ENCODE measurements at regions of chr1 and their contacts with region 1.

Region 1: DNA sequence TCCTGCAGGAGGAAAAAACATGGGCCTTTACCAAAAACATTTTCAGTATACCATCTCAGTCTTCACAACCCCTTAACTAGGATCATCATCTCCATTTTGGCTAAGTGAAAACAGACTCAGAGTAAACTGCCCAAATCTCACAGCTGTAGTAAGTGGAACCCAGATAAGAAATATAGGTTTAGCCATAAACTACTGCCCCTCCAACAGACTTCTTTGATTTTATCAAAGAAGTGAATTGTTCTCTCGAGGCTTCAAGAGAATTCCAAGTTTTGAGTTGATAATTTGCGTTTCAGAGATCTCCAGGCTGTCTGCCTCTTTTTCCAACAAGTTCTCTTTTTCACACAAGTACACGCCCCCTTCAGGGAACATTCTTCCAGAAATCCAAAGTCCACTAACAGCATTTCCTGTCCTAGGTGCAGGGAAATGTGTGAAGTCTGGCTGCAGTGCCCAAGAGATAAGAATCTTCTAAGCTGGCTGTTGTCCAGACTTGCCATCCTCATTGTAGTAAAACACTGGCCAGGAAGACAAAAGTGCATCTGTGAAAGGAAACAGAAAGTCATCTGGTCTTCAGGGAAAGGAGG is 30.8 kb downstream of the RNF19B start:
- DNase-seq: peak; percentile 79
- H3K4me3 ChIP-seq: no peak overlapping the region; a peak in 1 of 4 replicates
- H3K27ac ChIP-seq: peak overlapping the region; percentile 77 to 80
- H3K4me1 ChIP-seq: peaks cover 5 to 13% of the 10 kb centered on the region in 2 experiments
- H3K27me3 ChIP-seq: no peaks in the 10 kb centered on the region
- CTCF ChIP-seq: no peak; the same call in 1 of the 2 replicates
- EP300 ChIP-seq: peak; percentile 53 to 88; a peak in 3 of 4 replicates
- RAD21 ChIP-seq: peak; percentile 41

Region 2: GRCh38 chr1:32516402-32516801 is 417.4 kb before region 1 on chr1:
- CTCF ChIA-PET with region 1: no interaction called
- POLR2A ChIA-PET with region 1: no interaction called
- DNase-seq: no peak
- H3K4me3 ChIP-seq: no peak overlapping the region
- H3K27ac ChIP-seq: no peak overlapping the region
- H3K4me1 ChIP-seq: no peaks in the 10 kb centered on the region
- H3K27me3 ChIP-seq: no peaks in the 10 kb centered on the region
- CTCF ChIP-seq: no peak
- EP300 ChIP-seq: no peak
- RAD21 ChIP-seq: no peak

Region 3: GRCh38 chr1:32892368-32893197 is 41.2 kb before region 1 on chr1:
- CTCF ChIA-PET with region 1: interaction called, 16 read pairs
- POLR2A ChIA-PET with region 1: interaction called, 4 read pairs
- DNase-seq: peak; percentile 92
- H3K4me3 ChIP-seq: peak overlapping the region in 1 of 2 experiments; percentile 14; a peak in 3 of 4 replicates
- H3K27ac ChIP-seq: no peak overlapping the region
- H3K4me1 ChIP-seq: peaks cover 0 to 4% of the 10 kb centered on the region in 2 experiments; a peak in 2 of 4 replicates
- H3K27me3 ChIP-seq: 0 out of 2 replicates have a peak, but pooled peaks cover 5% of the 10 kb centered on the region
- CTCF ChIP-seq: peak; percentile 56
- EP300 ChIP-seq: no peak
- RAD21 ChIP-seq: no peak

Region 4: GRCh38 chr1:32944180-32944579 is 10.3 kb after region 1 on chr1:
- CTCF ChIA-PET with region 1: interaction called, 18 read pairs
- POLR2A ChIA-PET with region 1: no interaction called
- DNase-seq: no peak
- H3K4me3 ChIP-seq: no peak overlapping the region
- H3K27ac ChIP-seq: no peak overlapping the region
- H3K4me1 ChIP-seq: peaks cover 0 to 13% of the 10 kb centered on the region in 2 experiments; a peak in 3 of 4 replicates
- H3K27me3 ChIP-seq: no peaks in the 10 kb centered on the region
- CTCF ChIP-seq: no peak
- EP300 ChIP-seq: no peak
- RAD21 ChIP-seq: no peak

Region 5: DNA sequence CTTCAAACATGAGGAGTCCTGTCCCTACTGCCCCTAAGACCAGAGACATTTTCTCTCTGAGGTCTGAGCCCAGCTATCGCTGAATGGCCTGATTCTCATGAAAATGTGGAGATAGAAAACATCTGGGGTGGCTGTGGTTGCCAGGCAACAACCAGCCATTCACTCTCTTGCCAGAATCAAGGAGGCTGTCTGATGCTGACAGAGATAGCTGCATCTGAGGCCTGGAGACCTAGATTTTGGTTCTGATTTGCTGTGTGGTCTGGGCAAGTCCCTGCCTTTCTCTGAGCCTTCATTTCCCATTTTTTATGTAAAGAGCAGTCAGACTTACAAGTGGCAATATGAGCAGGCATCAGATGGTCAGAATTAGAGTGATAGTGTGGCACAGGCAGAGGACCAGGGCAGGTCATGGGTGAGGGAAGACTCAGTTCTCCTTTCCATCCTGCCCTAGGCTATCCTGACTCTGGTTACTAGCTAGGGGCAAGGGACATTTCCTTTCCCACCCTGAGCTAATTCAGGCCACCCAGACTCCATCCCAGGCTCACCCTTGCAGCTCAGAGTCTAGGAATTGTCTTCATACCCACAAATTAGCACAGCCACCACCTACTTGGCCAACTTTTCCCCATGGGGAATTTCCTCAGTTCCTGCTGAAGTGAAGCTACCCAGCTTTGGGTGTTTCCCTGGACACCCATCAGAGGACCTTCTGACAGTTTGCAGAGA is 50.8 kb after region 1 on chr1:
- CTCF ChIA-PET with region 1: interaction called, 15 read pairs
- POLR2A ChIA-PET with region 1: no interaction called
- DNase-seq: peak; percentile 86
- H3K4me3 ChIP-seq: no peak overlapping the region
- H3K27ac ChIP-seq: peak overlapping the region; percentile 71 to 95; a peak in 3 of 4 replicates
- H3K4me1 ChIP-seq: peaks cover 24 to 29% of the 10 kb centered on the region in 2 experiments
- H3K27me3 ChIP-seq: no peaks in the 10 kb centered on the region
- CTCF ChIP-seq: no peak
- EP300 ChIP-seq: peak in 1 of 2 experiments; percentile 70; a peak in 1 of 4 replicates
- RAD21 ChIP-seq: no peak

Region 6: GRCh38 chr1:33030575-33030974 is 96.7 kb after region 1 on chr1:
- CTCF ChIA-PET with region 1: interaction called, 21 read pairs
- POLR2A ChIA-PET with region 1: no interaction called
- DNase-seq: no peak
- H3K4me3 ChIP-seq: no peak overlapping the region
- H3K27ac ChIP-seq: no peak overlapping the region
- H3K4me1 ChIP-seq: peaks cover 0 to 4% of the 10 kb centered on the region in 2 experiments; a peak in 2 of 4 replicates
- H3K27me3 ChIP-seq: no peaks in the 10 kb centered on the region
- CTCF ChIP-seq: no peak
- EP300 ChIP-seq: no peak
- RAD21 ChIP-seq: no peak

Region 7: DNA sequence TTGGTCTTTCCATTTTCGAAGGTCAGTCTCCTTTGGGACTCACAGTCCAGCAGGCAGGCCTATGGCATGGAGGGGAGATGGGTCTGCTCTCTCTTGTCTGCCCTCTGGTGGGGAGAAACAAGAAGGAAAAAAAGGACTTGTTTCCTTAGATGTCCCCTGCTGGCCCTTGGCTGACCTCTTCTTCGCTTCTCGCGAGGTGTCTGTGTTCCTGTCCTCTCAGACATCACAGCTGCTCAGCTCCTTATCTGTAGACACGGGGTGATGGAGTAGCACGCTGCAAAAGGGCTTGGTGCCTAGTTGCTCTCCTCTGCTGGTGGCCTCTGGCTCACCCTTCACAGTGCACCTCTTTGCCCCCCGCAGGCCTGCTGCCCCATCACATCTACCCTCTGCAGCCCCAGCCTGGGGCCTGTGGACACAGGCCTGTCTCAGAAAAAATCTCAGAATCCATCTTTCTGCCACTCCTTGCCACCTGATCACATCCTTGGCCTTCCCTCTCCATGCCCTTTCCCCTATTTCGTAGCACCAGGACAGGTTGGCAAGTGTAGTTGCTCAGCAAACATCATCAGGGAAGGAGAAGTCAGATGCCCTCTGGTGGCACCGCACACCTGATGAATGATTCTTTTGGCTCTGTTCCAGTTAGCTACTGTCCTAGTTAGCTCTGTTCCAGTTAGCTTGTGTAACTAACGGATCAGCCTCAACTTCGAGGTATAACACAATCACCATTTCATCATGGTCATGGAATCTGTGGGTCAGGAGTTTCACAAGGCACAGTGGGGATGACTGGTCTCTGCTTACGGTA is 121.6 kb after region 1 on chr1:
- CTCF ChIA-PET with region 1: interaction called, 120 read pairs
- POLR2A ChIA-PET with region 1: no interaction called
- DNase-seq: peak; percentile 85
- H3K4me3 ChIP-seq: no peak overlapping the region
- H3K27ac ChIP-seq: peak overlapping the region in 1 of 2 experiments; percentile 56; a peak in 1 of 4 replicates
- H3K4me1 ChIP-seq: peaks cover 3 to 10% of the 10 kb centered on the region in 2 experiments; a peak in 2 of 4 replicates
- H3K27me3 ChIP-seq: no peaks in the 10 kb centered on the region
- CTCF ChIP-seq: peak; percentile 75
- EP300 ChIP-seq: no peak
- RAD21 ChIP-seq: peak; percentile 81

Region 8: GRCh38 chr1:33086384-33086850 is 152.6 kb after region 1 on chr1:
- CTCF ChIA-PET with region 1: interaction called, 67 read pairs
- POLR2A ChIA-PET with region 1: no interaction called
- DNase-seq: peak; percentile 80
- H3K4me3 ChIP-seq: no peak overlapping the region; a peak in 1 of 4 replicates
- H3K27ac ChIP-seq: no peak overlapping the region
- H3K4me1 ChIP-seq: peaks cover 5 to 14% of the 10 kb centered on the region in 2 experiments; a peak in 1 of 4 replicates
- H3K27me3 ChIP-seq: no peaks in the 10 kb centered on the region
- CTCF ChIP-seq: peak; percentile 80
- EP300 ChIP-seq: no peak
- RAD21 ChIP-seq: peak; percentile 93